ENCODE measurements at regions of chr2 and their contacts with region 1.

Region 1: DNA sequence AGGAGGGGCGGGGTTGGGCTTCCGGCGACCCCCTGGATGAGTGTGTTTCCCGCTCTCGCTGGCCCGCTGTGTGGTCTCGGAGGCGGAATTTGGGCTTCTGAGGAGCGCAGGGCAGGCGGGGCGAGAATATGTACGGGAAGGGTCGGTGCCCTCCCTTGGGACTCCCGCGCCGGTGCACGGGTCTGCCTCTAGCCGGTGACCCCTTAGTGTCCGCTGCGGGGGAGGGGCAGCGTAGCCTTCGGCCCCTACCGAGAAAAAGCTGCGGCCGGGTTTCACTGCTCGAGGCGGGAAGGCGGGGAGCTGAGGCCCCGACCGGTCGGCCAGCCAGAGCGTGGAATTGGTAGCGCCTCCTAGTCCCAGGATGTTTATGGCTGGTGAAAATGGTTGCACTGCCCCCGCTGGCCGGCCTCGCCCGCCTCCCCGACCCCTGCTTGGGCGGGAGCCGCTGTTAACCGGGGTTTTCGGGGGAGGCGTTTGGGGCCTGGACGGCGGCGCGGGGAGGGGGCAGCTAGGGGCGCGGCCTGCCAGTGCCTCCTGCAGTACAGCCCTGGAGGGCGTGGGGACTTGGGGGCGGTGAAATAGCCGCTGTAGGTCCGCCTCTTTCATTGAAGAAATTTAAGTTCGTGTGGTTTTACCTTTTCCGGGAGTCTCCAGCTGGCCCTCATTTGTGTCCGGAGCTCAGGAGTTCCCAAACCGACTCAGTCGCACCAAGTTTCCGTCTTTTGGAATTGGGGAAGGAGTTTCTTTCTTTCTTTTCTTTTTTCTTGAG is at the start of gene UGP2:
- DNase-seq: peak; percentile 92
- H3K4me3 ChIP-seq: peak within 1 kb of the TSS; percentile 79
- H3K27ac ChIP-seq: peak within 1 kb of the TSS; percentile 87
- H3K4me1 ChIP-seq: peaks cover 59% of the 10 kb centered on the region
- CTCF ChIP-seq: peak; percentile 55
- total RNA-seq, gene UGP2: 53.7 and 56.9 TPM in 2 replicates

Region 2: GRCh38 chr2:63588385-63589147 is 252.9 kb before region 1 on chr2 and contains the starts of genes MDH1 and WDPCP:
- CTCF ChIA-PET with region 1: no interaction called
- POLR2A ChIA-PET with region 1: interaction called, 3 read pairs
- intact Hi-C with region 1: loop called (anchors 5 kb)
- DNase-seq: peak; percentile 99
- H3K4me3 ChIP-seq: peak within 1 kb of the TSS; percentile 97
- H3K27ac ChIP-seq: peak within 1 kb of the TSS; percentile 70
- H3K4me1 ChIP-seq: peaks cover 36% of the 10 kb centered on the region
- CTCF ChIP-seq: no peak
- total RNA-seq, gene MDH1: 190 and 224 TPM in 2 replicates
- total RNA-seq, gene WDPCP: 14.8 and 24.5 TPM in 2 replicates

Region 3: GRCh38 chr2:63819765-63820717 is 21.4 kb before region 1 on chr2:
- CTCF ChIA-PET with region 1: no interaction called
- POLR2A ChIA-PET with region 1: interaction called, 35 read pairs
- intact Hi-C with region 1: loop called (anchors 1 kb)
- DNase-seq: peak; percentile 66
- H3K4me3 ChIP-seq: peak overlapping the region; percentile 10
- H3K27ac ChIP-seq: peak overlapping the region; percentile 67
- H3K4me1 ChIP-seq: peaks cover 80% of the 10 kb centered on the region
- CTCF ChIP-seq: no peak

Region 4: DNA sequence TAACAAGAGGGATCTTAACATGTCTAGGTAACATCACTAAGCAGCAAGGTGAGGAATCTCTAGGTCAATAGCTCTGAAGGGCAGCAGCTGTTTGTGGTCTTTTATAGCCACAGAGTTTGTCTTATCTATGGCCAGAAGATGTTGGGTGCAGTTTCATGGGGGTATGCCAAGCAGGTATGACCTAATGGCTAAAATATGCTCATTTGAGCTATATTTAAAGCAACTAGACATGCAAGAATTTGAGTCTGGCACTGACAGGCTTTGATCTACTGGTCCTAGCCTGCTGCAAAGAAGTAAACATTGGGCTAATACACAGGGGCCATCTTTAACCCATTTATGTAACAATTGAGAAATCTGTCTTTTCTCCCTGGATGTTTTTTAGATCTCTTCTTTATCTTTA is 13.7 kb before region 1 on chr2:
- CTCF ChIA-PET with region 1: interaction called, 4 read pairs
- POLR2A ChIA-PET with region 1: interaction called, 18 read pairs
- intact Hi-C with region 1: loop called (anchors 1 kb)
- DNase-seq: no peak
- H3K4me3 ChIP-seq: no peak overlapping the region
- H3K27ac ChIP-seq: no peak overlapping the region
- H3K4me1 ChIP-seq: peaks cover 28% of the 10 kb centered on the region
- CTCF ChIP-seq: no peak

Region 5: DNA sequence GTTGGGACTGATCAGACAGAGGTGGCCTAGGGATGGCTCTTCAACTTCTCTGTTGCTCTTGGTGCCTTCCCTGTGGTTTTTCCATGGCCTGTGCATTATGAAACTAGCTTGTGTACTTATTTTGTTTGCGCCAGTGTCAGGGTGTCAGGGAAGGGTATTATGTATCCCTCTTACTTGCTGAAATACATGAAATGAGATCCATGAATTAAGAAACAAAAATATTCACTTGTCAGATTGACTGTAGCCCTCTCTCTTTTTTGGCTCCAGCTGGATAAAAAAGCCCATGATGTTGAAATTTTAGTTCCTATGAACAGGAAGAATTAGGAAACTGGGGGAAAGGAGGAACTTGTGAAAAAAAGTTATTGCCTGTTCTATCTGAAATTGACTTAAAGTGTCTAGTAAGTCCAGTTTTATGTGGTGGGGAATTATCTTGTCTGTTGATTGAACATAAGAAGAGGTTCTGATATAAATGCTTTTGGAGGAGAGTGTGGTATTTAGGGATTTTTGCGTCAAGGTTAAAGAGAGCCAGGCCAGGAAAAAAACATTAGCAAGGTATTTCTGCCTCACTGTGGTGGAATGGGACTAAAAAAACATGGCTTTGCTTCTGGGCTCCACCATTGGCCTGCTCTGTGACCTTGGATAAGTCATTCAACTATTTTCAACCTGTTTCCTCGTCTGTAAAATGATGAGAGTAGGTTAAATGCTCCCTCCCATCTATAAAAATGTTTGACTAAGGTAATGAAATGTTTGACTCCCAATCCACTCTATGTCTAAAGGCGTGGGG is 12.3 kb after region 1 on chr2:
- CTCF ChIA-PET with region 1: no interaction called
- POLR2A ChIA-PET with region 1: interaction called, 11 read pairs
- intact Hi-C with region 1: no loop called
- DNase-seq: no peak
- H3K4me3 ChIP-seq: no peak overlapping the region
- H3K27ac ChIP-seq: no peak overlapping the region
- H3K4me1 ChIP-seq: no peaks in the 10 kb centered on the region
- CTCF ChIP-seq: no peak

Region 6: GRCh38 chr2:63861220-63861822 is 19.9 kb after region 1 on chr2:
- CTCF ChIA-PET with region 1: no interaction called
- POLR2A ChIA-PET with region 1: interaction called, 21 read pairs
- intact Hi-C with region 1: no loop called
- DNase-seq: peak; percentile 80
- H3K4me3 ChIP-seq: no peak overlapping the region
- H3K27ac ChIP-seq: no peak overlapping the region
- H3K4me1 ChIP-seq: no peaks in the 10 kb centered on the region
- CTCF ChIP-seq: peak; percentile 87

Measured in OCI-LY7 (cell line).